CD8-positive, alpha-beta T cell (primary cell): ENCODE measurements at regions of chr15 and their contacts with region 1.

Region 1: GRCh38 chr15:43791993-43792760 is at the start of gene SERF2:
- DNase-seq: peak; percentile 99 to 100 (median 99)
- ATAC-seq: peak; percentile 95
- H3K4me3 ChIP-seq: peak within 1 kb of the TSS; percentile 90 to 98
- H3K4me3 Mint-ChIP-seq: peak within 1 kb of the TSS; percentile 96
- H3K27ac ChIP-seq: peak within 1 kb of the TSS; percentile 98
- H3K27ac Mint-ChIP-seq: peak within 1 kb of the TSS; percentile 97
- H3K4me1 ChIP-seq: peaks cover 38% of the 10 kb centered on the region
- H3K4me1 Mint-ChIP-seq: peaks cover 42% of the 10 kb centered on the region
- H3K27me3 ChIP-seq: no peaks in the 10 kb centered on the region
- H3K27me3 Mint-ChIP-seq: no peaks in the 10 kb centered on the region
- CTCF ChIP-seq: no peak
- total RNA-seq, gene SERF2: 322 TPM

Region 2: GRCh38 chr15:43776718-43777583 is 15.2 kb before region 1 on chr15 and contains the start of gene ELL3:
- CTCF ChIA-PET with region 1: interaction called, 28 read pairs
- POLR2A ChIA-PET with region 1: interaction called, 29 read pairs
- intact Hi-C with region 1: loop called (anchors 1 kb)
- DNase-seq: peak; percentile 67 to 93 (median 82)
- ATAC-seq: peak; percentile 80
- H3K4me3 ChIP-seq: peak within 1 kb of the TSS; percentile 82 to 94
- H3K4me3 Mint-ChIP-seq: peak within 1 kb of the TSS; percentile 93
- H3K27ac ChIP-seq: peak within 1 kb of the TSS; percentile 50 to 56
- H3K27ac Mint-ChIP-seq: peak within 1 kb of the TSS; percentile 87
- H3K4me1 ChIP-seq: peaks cover 11% of the 10 kb centered on the region
- H3K4me1 Mint-ChIP-seq: peaks cover 15% of the 10 kb centered on the region
- H3K27me3 ChIP-seq: no peaks in the 10 kb centered on the region
- H3K27me3 Mint-ChIP-seq: no peaks in the 10 kb centered on the region
- CTCF ChIP-seq: peak; percentile 82
- total RNA-seq, gene ELL3: 0.67 to 1.1 TPM